Naive thymus-derived CD4-positive, alpha-beta T cell (primary cell): ENCODE measurements at regions of chr13 and their contacts with region 1.

Region 1: DNA sequence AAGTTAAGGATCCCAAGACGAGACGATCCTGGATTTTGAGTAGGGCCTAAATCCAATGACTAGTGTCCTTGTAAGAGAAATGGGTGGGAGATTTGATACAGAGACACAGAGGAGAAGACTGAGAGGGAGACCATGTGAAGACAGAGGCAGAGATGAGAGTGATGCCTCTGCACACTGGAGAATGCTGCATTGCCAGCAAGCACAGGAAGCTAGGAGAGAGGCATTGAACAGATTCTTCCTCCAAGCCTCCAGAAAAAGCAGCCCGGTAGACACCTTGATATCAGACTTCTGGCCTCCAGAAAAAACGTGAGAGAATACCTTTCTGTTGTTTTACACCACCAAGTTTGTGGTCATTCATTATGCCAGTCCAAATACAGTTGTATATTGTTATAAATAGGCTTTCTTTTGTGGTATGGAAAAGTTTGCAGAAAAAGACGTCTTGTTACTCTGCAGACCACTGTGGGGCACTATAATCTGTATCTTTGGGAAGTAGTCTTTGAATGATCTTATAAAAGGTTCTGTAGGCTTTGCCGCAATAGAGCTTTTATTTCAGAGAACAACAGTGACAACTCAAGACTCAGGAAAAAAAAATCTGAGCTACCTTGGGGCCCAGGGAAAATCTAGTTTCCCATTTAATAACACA is 17.9 kb upstream of the RFC3 start:
- DNase-seq: peak in 2 of 9 donors; percentile 12 to 13
- ATAC-seq: peak; percentile 46
- H3K4me3 ChIP-seq: no peak overlapping the region
- H3K4me3 Mint-ChIP-seq: peak overlapping the region in 2 of 10 donors; percentile 25 to 54
- H3K27ac ChIP-seq: no peak overlapping the region
- H3K27ac Mint-ChIP-seq: peak overlapping the region in 1 of 9 donors; percentile 5
- H3K4me1 ChIP-seq: no peaks in the 10 kb centered on the region
- H3K4me1 Mint-ChIP-seq: peaks cover 0 to 10% (median 0%) of the 10 kb centered on the region in 7 donors
- H3K27me3 ChIP-seq: no peaks in the 10 kb centered on the region
- H3K27me3 Mint-ChIP-seq: peaks cover 0 to 20% (median 11%) of the 10 kb centered on the region in 5 donors

Region 2: DNA sequence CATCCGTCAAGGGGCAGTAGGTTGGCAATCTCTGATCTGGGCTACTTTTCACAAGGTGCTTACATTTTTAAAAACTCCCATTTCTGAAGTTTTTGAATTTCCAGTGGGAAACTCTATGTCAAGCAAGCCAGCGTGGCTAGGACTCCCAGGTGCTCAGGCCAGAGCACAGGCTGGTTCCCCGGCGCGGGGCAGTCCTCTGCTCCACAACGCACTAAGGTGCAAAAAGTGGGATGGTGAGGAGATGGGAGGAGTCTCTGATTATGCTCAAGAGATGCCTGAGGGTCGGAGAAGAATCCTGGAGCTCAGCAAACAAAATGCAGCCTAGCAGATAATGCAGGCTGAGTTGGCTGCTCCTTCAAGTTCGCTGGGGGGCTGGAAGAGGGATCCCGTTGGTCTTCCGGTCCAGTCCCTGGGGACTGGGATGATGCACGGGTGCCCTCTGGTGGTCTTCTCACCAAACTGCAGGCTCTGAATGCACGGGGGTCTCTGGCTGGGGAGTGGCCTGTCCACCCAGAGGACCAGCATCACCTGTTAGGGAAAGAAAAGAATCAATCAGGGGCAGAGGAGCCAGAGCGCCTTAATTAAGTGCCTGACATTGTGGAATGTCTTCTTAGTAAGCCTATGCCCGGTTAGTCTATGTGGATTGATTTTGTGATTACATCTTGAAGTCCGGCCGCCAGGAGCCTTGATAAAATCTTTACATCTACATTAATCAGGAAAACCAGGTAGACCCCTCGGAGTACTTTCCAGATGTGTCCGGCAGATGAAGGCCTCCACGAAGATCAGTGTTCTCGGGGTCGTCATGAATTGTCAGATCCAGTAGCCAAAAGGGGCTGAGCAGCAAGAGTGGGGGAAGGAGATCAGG is 1920.9 kb after region 1 on chr13:
- CTCF ChIA-PET with region 1: no interaction called
- POLR2A ChIA-PET with region 1: no interaction called
- intact Hi-C with region 1: loop called in 1 of 2 experiments (anchors 5 kb)
- DNase-seq: peak in 5 of 9 donors; percentile 3 to 28 (median 9)
- ATAC-seq: peak; percentile 46
- H3K4me3 ChIP-seq: no peak overlapping the region
- H3K4me3 Mint-ChIP-seq: peak overlapping the region in 3 of 10 donors; percentile 9 to 44 (median 21)
- H3K27ac ChIP-seq: no peak overlapping the region
- H3K27ac Mint-ChIP-seq: no peak overlapping the region
- H3K4me1 ChIP-seq: no peaks in the 10 kb centered on the region
- H3K4me1 Mint-ChIP-seq: peaks cover 0 to 8% (median 0%) of the 10 kb centered on the region in 7 donors
- H3K27me3 ChIP-seq: no peaks in the 10 kb centered on the region
- H3K27me3 Mint-ChIP-seq: peaks cover 8 to 28% (median 10%) of the 10 kb centered on the region in 5 donors